ENCODE measurements at regions of chr6 and their contacts with region 1.

Region 1: GRCh38 chr6:135535989-135536414 is 38.5 kb upstream of the AHI1 start:
- DNase-seq: peak in 3 of 7 donors; percentile 9 to 21 (median 20)
- H3K4me3 ChIP-seq: no peak overlapping the region
- H3K27ac ChIP-seq: no peak overlapping the region
- H3K4me1 ChIP-seq: peaks cover 0 to 4% of the 10 kb centered on the region in 2 donors
- H3K27me3 ChIP-seq: no peaks in the 10 kb centered on the region
- CTCF ChIP-seq: peak; percentile 52 to 75 (median 65)
- POLR2A ChIP-seq: no peak

Region 2: GRCh38 chr6:135675862-135676261 is 139.9 kb after region 1 on chr6:
- intact Hi-C with region 1: no loop called
- DNase-seq: peak in 1 of 7 donors; percentile 9
- H3K4me3 ChIP-seq: no peak overlapping the region
- H3K27ac ChIP-seq: no peak overlapping the region
- H3K4me1 ChIP-seq: no peaks in the 10 kb centered on the region
- H3K27me3 ChIP-seq: no peaks in the 10 kb centered on the region
- CTCF ChIP-seq: no peak
- POLR2A ChIP-seq: no peak

Region 3: GRCh38 chr6:135870722-135871121 is 334.7 kb after region 1 on chr6:
- intact Hi-C with region 1: no loop called
- DNase-seq: no peak
- H3K4me3 ChIP-seq: no peak overlapping the region
- H3K27ac ChIP-seq: no peak overlapping the region
- H3K4me1 ChIP-seq: no peaks in the 10 kb centered on the region
- H3K27me3 ChIP-seq: no peaks in the 10 kb centered on the region
- CTCF ChIP-seq: no peak
- POLR2A ChIP-seq: no peak

Region 4: DNA sequence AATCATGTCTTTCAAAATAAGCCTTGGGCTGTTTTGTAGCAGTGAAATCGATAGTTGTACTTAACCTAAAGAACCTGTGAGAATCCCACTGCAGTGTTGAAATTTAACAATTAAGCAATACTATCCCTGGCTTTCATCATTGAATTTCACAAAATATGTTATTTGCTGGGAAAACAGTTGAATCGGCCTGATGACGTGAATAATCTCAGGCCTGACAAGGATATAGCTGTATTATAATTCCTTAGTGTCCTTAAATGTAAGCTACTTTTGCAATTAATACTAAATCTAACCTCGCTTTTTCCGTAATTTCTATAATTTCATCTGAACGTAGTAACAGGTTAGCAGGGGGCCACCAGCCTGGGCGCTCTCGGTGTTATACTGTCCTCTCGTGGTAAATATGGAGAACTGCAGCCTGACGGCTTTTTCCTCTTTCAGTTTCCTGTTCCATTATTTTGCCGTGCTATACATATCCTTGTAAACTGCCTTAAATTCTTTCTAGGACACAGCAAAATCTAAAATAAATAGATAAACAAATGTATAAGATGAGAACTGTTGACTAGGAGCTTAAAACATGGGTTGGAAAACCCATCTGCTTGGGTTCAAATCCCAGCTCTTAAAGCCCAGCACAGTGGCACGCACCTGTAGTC is 690.1 kb after region 1 on chr6:
- intact Hi-C with region 1: loop called (anchors 5 to 10 kb)
- DNase-seq: peak in 6 of 7 donors; percentile 41 to 84 (median 59)
- H3K4me3 ChIP-seq: peak overlapping the region in 1 of 4 donors; percentile 46
- H3K27ac ChIP-seq: no peak overlapping the region
- H3K4me1 ChIP-seq: peaks cover 0 to 17% of the 10 kb centered on the region in 2 donors
- H3K27me3 ChIP-seq: no peaks in the 10 kb centered on the region
- CTCF ChIP-seq: peak; percentile 99 to 100 (median 100)
- POLR2A ChIP-seq: no peak

Region 5: GRCh38 chr6:136317021-136317694 is 781.2 kb after region 1 on chr6:
- intact Hi-C with region 1: loop called in 1 of 2 experiments (anchors 10 kb)
- DNase-seq: peak; percentile 52 to 82 (median 56)
- H3K4me3 ChIP-seq: no peak overlapping the region
- H3K27ac ChIP-seq: no peak overlapping the region
- H3K4me1 ChIP-seq: no peaks in the 10 kb centered on the region
- H3K27me3 ChIP-seq: no peaks in the 10 kb centered on the region
- CTCF ChIP-seq: peak; percentile 67 to 91 (median 80)
- POLR2A ChIP-seq: no peak